Dorsolateral prefrontal cortex (tissue), 120 donors: ENCODE measurements at regions of chr3 and their contacts with region 1.

Region 1: DNA sequence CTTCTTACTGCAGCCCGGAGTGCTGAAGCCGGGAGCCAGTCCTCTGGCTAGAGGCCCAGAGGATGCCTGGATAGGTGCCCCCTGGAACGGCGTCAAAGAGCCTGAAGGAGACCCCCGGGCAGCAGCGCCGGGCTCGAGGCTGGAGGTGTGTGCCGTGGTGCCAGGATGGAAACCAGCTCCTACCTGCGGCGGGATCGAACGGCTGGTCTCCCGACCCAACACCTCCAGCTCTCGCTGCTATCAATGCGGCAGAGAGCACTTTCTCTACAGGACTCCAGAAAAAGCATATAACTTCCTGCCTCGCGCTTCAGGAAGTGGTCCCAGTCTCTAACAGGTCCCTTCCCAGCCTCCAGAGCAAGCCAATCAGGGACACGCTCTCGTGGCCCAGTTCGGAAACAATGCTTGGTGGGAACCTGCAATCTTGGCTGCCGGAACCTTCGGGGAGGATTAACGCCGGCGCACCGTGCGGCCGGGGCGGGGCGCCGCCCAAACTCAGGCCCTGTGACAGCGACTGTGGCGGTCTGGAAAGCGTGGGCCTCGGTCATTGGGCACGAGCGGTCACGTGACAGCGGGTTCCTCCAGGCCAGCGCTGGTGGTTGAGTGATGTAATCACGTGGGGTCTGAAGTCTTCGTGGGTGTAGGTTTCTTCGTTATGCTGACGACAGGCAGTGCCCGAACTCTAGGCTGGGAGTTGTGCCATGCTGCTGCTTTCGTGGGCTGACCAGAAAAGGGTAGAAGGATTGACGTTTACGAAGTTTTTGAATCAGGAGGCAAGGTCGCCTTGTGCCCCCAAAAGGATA is at the start of gene SLC33A1:
- DNase-seq: peak; percentile 99 to 100 (median 100)
- H3K4me3 ChIP-seq: peak within 1 kb of the TSS; percentile 58 to 100 (median 93)
- H3K27ac ChIP-seq: peak within 1 kb of the TSS; percentile 58 to 99 (median 95)
- H3K27me3 ChIP-seq: no peaks in the 10 kb centered on the region
- CTCF ChIP-seq: peak in 44 of 56 donors; percentile 5 to 60 (median 30)
- total RNA-seq, gene SLC33A1: 18.5 to 34.5 (median 25.1) TPM

Region 2: GRCh38 chr3:154323891-154324738 is 1530.2 kb before region 1 on chr3 and contains the start of gene DHX36:
- intact Hi-C with region 1: loop called in 1 of 2 experiments (anchors 10 kb)
- DNase-seq: peak; percentile 81 to 93 (median 92)
- H3K4me3 ChIP-seq: peak within 1 kb of the TSS; percentile 61 to 97 (median 82)
- H3K27ac ChIP-seq: peak within 1 kb of the TSS; percentile 21 to 93 (median 86)
- H3K27me3 ChIP-seq: no peaks in the 10 kb centered on the region
- CTCF ChIP-seq: peak in 8 of 56 donors; percentile 5 to 44 (median 18)
- total RNA-seq, gene DHX36: 49.3 to 112 (median 84.4) TPM

Region 3: GRCh38 chr3:155525324-155525833 is 329.0 kb before region 1 on chr3:
- intact Hi-C with region 1: no loop called
- DNase-seq: no peak
- H3K4me3 ChIP-seq: no peak overlapping the region
- H3K27ac ChIP-seq: no peak overlapping the region
- H3K27me3 ChIP-seq: no peaks in the 10 kb centered on the region
- CTCF ChIP-seq: no peak

Region 4: GRCh38 chr3:155805802-155806618 is 48.3 kb before region 1 on chr3 and contains the start of gene C3orf33:
- intact Hi-C with region 1: loop called (anchors 5 kb)
- DNase-seq: peak; percentile 36 to 86 (median 64)
- H3K4me3 ChIP-seq: peak within 1 kb of the TSS; percentile 62 to 93 (median 82)
- H3K27ac ChIP-seq: peak within 1 kb of the TSS; percentile 50 to 96 (median 87)
- H3K27me3 ChIP-seq: no peaks in the 10 kb centered on the region
- CTCF ChIP-seq: peak; percentile 56 to 97 (median 82)
- total RNA-seq, gene C3orf33: 4.2 to 12.5 (median 7.3) TPM